Activated B cell treated with CpG ODN at 0.5 μM for 24 hours (primary cell): ENCODE measurements at regions of chrX and their contacts with region 1.

Region 1: GRCh38 chrX:119574394-119575266 is at the start of gene UBE2A:
- DNase-seq: peak; percentile 78
- ATAC-seq: peak; percentile 94
- H3K4me3 Mint-ChIP-seq: peak within 1 kb of the TSS; percentile 93
- H3K27ac Mint-ChIP-seq: peak within 1 kb of the TSS; percentile 91
- H3K4me1 Mint-ChIP-seq: peaks cover 38% of the 10 kb centered on the region
- H3K27me3 Mint-ChIP-seq: no peaks in the 10 kb centered on the region
- CTCF ChIP-seq: no peak
- total RNA-seq, gene UBE2A: 65.9 and 73.5 TPM in 2 replicates

Region 2: GRCh38 chrX:119529345-119530276 is 45.0 kb before region 1 on chrX:
- CTCF ChIA-PET with region 1: no interaction called
- POLR2A ChIA-PET with region 1: interaction called, 11 read pairs
- intact Hi-C with region 1: no loop called
- DNase-seq: no peak
- ATAC-seq: peak; percentile 75
- H3K4me3 Mint-ChIP-seq: no peak overlapping the region
- H3K27ac Mint-ChIP-seq: peak overlapping the region; percentile 72
- H3K4me1 Mint-ChIP-seq: peaks cover 22% of the 10 kb centered on the region
- H3K27me3 Mint-ChIP-seq: no peaks in the 10 kb centered on the region
- CTCF ChIP-seq: no peak